Colonic mucosa (tissue), 4 donors: ENCODE measurements at regions of chr21 and their contacts with region 1.

Region 1: DNA sequence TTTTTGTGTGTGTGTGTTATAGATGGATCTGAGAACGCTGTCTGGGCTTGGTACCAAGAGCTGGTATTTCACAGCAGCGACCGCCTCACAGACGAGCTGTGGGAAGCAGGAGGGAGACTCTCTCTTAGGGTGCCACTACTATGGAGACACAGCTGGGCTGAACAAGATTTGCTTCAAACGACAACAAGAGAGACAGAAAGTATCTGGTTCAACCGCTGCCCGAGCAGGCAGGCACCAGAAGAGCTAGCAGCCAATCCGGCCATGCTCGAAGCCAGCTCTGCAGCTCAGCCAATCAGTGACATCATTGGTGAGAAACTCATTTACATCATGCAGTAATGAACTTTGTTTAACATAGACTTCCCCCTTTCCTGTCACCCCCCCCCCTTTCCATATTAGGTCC is 341.3 kb downstream of the USP25 start:
- DNase-seq: no peak
- H3K4me3 ChIP-seq: no peak overlapping the region
- H3K27ac ChIP-seq: no peak overlapping the region
- H3K4me1 ChIP-seq: no peaks in the 10 kb centered on the region
- H3K27me3 ChIP-seq: no peaks in the 10 kb centered on the region
- CTCF ChIP-seq: no peak

Region 2: GRCh38 chr21:16117851-16118592 is 46.9 kb after region 1 on chr21:
- intact Hi-C with region 1: no loop called
- DNase-seq: no peak
- H3K4me3 ChIP-seq: no peak overlapping the region
- H3K27ac ChIP-seq: no peak overlapping the region
- H3K4me1 ChIP-seq: no peaks in the 10 kb centered on the region
- H3K27me3 ChIP-seq: no peaks in the 10 kb centered on the region
- CTCF ChIP-seq: no peak

Region 3: GRCh38 chr21:16330082-16330907 is 259.2 kb after region 1 on chr21:
- intact Hi-C with region 1: loop called (anchors 10 kb)
- DNase-seq: peak; percentile 21
- H3K4me3 ChIP-seq: no peak overlapping the region
- H3K27ac ChIP-seq: no peak overlapping the region
- H3K4me1 ChIP-seq: no peaks in the 10 kb centered on the region
- H3K27me3 ChIP-seq: no peaks in the 10 kb centered on the region
- CTCF ChIP-seq: peak; percentile 55